ENCODE measurements at regions of chr13 and their contacts with region 1.

Region 1: GRCh38 chr13:51764184-51765141 is 39.5 kb downstream of the DHRS12 start:
- DNase-seq: peak; percentile 83
- ATAC-seq: peak; percentile 91
- H3K4me3 Mint-ChIP-seq: peak overlapping the region; percentile 74
- H3K27ac Mint-ChIP-seq: peak overlapping the region; percentile 97
- H3K4me1 Mint-ChIP-seq: peaks cover 45% of the 10 kb centered on the region
- H3K27me3 Mint-ChIP-seq: no peaks in the 10 kb centered on the region

Region 2: DNA sequence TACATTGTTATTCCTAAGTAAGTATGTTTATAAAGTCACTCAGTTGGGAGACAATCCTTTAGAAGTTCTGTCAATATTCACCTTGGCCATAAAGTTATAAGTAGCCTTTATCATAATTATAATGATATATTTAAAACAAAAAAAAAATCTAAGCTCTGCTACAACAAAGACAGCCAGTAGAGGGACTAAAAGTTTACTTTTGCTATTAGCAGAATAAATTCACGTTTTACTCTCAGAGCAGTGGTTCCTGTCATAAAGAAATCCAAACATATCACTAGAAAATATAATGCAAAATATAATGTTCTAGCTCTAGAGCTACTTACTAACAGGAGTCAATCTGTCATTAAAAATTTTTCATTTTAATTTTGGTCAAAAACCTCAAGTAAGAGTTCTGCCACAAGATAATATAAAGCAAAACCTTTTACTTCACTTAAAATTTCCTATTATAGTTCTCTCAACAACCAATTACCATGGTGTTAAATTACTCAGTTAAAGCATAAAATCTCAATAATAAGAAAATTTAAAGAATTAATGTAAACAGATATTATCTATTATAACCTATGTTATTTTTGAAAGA is 329.4 kb before region 1 on chr13:
- CTCF ChIA-PET with region 1: interaction called, 12 read pairs
- POLR2A ChIA-PET with region 1: no interaction called
- intact Hi-C with region 1: no loop called
- DNase-seq: no peak
- ATAC-seq: no peak
- H3K4me3 Mint-ChIP-seq: no peak overlapping the region
- H3K27ac Mint-ChIP-seq: no peak overlapping the region
- H3K4me1 Mint-ChIP-seq: peaks cover 14% of the 10 kb centered on the region
- H3K27me3 Mint-ChIP-seq: no peaks in the 10 kb centered on the region

Region 3: GRCh38 chr13:51645154-51645650 is 119.3 kb before region 1 on chr13:
- CTCF ChIA-PET with region 1: no interaction called
- POLR2A ChIA-PET with region 1: no interaction called
- intact Hi-C with region 1: loop called in 1 of 2 experiments (anchors 10 kb)
- DNase-seq: peak; percentile 24
- ATAC-seq: peak; percentile 48
- H3K4me3 Mint-ChIP-seq: peak overlapping the region; percentile 29
- H3K27ac Mint-ChIP-seq: peak overlapping the region; percentile 90
- H3K4me1 Mint-ChIP-seq: peaks cover 43% of the 10 kb centered on the region
- H3K27me3 Mint-ChIP-seq: no peaks in the 10 kb centered on the region

Region 4: DNA sequence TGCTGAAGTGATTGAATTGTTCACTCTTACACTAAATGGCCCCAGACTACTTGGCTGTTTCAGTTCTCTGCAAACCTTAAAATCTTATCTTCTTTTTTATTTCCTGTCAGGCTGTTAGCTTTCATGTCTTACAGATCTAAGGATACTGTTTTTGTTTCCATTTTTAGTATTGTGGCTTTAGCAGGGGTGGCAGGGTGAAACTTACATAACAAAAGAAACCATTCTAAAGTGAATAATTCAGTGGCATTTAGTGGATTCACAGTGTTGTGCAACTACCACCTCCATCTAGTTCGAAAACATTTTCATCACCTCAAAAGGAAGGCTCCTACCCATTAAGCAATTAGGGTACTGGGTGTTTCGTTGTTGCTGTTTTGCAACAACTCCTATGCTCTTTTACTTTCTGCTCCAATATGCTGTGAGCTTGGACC is 60.7 kb after region 1 on chr13:
- CTCF ChIA-PET with region 1: interaction called, 4 read pairs
- POLR2A ChIA-PET with region 1: no interaction called
- intact Hi-C with region 1: loop called in 1 of 2 experiments (anchors 2 kb)
- DNase-seq: no peak
- ATAC-seq: peak; percentile 40
- H3K4me3 Mint-ChIP-seq: peak overlapping the region; percentile 69
- H3K27ac Mint-ChIP-seq: peak overlapping the region; percentile 92
- H3K4me1 Mint-ChIP-seq: peaks cover 91% of the 10 kb centered on the region
- H3K27me3 Mint-ChIP-seq: no peaks in the 10 kb centered on the region